Aorta (tissue), 5 donors: ENCODE measurements at regions of chr21 and their contacts with region 1.

Region 1: DNA sequence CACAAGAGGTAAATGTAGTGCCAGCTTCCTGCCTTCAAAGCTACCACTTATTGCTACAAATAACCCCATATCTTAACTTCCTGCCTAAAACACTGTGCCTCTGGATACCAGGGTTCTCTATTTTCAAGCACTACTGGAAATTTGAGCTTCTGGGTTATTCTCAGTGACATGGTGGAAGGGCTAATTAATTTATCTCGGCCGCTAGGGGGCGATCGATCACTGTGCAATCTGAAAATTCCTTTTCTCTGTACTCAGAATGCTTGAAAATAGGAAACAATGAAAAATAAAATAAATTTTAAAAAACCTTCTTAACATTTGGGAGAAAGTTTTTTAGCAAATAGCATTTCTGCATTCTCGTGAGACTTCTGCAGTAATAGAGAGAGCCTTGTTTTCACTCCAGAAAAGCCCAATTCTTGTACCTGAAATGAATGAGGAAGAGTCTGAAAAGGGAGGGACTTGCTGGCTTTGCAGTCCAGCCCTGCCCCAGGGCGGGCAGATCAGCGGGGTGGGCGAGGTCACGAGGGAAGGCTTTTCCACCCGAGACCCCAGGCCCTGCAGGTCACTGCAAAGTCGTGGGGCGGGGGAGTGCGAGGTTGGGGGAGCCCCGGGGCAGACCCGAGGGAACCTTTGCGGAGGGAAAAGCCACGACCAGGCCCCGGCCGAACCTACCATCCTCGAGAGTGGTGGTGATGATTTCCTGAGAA is 276.7 kb downstream of the PCP4 start:
- DNase-seq: peak; percentile 54 to 82
- ATAC-seq: no peak
- H3K4me3 ChIP-seq: no peak overlapping the region
- H3K27ac ChIP-seq: no peak overlapping the region
- H3K4me1 ChIP-seq: no peaks in the 10 kb centered on the region
- H3K27me3 ChIP-seq: no peaks in the 10 kb centered on the region

Region 2: GRCh38 chr21:39066829-39067780 is 1076.9 kb before region 1 on chr21:
- intact Hi-C with region 1: no loop called
- DNase-seq: no peak
- ATAC-seq: peak; percentile 86
- H3K4me3 ChIP-seq: no peak overlapping the region
- H3K27ac ChIP-seq: peak overlapping the region; percentile 18 to 37
- H3K4me1 ChIP-seq: peaks cover under 1 to 3% of the 10 kb centered on the region in 2 donors
- H3K27me3 ChIP-seq: no peaks in the 10 kb centered on the region

Region 3: GRCh38 chr21:40385892-40386599 is 242.1 kb after region 1 on chr21:
- intact Hi-C with region 1: loop called in 1 of 2 experiments (anchors 5 kb)
- DNase-seq: peak; percentile 52 to 78
- ATAC-seq: no peak
- H3K4me3 ChIP-seq: no peak overlapping the region
- H3K27ac ChIP-seq: no peak overlapping the region
- H3K4me1 ChIP-seq: no peaks in the 10 kb centered on the region
- H3K27me3 ChIP-seq: no peaks in the 10 kb centered on the region

Region 4: DNA sequence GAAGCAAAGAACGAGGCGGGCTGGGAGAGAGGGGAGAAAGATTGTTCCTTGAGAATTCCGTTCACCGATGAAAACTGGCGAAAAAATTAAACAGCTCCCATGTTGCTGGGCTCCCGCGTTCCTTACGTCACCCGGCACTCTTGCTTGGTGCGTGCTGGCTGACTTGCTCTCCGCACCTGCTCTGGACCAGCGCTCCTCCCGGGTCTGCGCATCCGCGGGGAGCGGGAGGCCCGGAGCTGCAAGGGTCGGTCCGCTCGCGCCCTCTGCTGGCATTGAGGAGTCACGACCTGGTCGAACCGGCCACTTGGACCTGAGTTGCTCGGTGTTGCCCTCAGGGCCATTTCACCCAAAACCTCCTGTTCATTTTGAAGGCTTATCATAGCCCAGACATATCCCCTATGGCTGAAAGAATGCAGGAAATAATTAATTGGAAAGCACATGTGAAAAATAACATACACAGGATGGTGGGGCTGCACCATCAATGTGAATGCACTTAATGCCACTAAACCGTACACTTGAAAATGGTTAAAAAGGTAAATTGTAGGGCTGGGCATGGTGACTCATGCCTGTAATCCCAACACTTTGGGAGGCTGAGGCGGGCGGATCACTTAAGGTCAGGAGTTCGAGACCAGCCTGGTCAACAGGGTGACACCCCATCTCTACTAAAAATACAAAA is 925.1 kb after region 1 on chr21:
- intact Hi-C with region 1: loop called (anchors 5 kb)
- DNase-seq: peak; percentile 87 to 94
- ATAC-seq: peak; percentile 80
- H3K4me3 ChIP-seq: peak overlapping the region; percentile 11 to 27
- H3K27ac ChIP-seq: no peak overlapping the region
- H3K4me1 ChIP-seq: no peaks in the 10 kb centered on the region
- H3K27me3 ChIP-seq: peaks cover 0 to 2% of the 10 kb centered on the region in 2 donors